ENCODE measurements at regions of chr9 and their contacts with region 1.

Region 1: DNA sequence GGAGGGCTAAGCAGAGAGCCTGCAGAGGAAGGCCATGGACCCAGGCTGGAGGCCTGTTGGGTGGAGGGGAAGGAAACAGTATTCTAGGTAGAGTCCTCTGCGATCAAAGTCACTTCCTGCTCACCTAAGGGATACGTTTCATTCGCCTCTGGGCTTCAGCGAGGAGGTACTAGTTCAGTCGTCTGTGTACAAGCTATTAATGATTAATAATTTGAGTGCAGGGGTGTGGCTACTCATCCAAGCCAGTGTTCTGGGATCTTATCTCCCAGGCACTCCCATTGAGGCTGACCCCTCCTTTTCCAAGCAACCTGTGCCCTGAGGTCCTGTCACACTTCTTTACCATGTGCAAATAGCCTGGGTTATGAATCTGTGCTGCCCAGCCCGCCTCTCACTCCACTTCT is 25.2 kb downstream of the RALGPS1 start:
- DNase-seq: no peak
- H3K4me3 ChIP-seq: no peak overlapping the region
- H3K27ac ChIP-seq: no peak overlapping the region
- H3K4me1 ChIP-seq: peaks cover 5% of the 10 kb centered on the region
- H3K27me3 ChIP-seq: no peaks in the 10 kb centered on the region
- CTCF ChIP-seq: no peak
- POLR2A ChIP-seq: no peak

Region 2: DNA sequence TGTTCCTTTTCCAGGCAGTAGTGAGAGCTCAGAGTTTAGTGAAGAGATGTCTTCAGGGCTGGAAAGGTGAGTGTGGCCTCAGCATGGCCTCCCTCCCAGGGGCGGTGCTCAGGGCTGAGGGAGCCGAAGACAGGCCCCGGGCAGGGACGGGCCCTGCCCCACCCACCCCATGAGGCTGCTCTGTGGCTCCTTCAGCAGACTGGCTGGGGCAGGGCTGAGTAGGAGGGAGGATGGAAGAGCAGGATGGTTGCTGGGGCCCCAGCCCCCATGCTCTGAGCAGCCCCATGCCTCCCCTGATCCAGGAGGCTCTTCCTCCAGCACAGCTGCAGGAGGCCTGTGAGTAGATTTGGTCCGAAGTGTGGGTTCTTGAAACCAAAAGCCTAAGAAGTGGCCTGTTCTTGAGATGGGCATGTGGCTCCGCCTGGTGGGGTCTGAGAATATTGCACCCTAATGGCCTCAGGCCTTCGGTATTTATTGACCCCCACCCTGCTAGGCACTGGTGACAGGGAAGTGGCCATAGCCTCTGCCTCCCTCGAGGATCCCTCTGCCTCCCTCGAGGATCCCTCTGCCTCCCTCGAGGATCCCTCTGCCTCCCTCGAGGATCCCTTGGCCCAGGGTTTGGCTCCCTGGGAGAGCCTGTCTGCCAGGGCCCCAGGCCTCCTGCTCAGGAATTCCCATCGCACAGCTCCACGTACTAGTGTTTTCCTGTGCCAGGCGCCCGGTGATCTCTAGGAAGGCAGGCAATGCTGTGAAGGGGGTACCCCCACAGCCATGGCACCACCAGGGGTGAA is 259.4 kb after region 1 on chr9:
- intact Hi-C with region 1: loop called (anchors 5 kb)
- DNase-seq: no peak
- H3K4me3 ChIP-seq: no peak overlapping the region
- H3K27ac ChIP-seq: peak overlapping the region; percentile 87
- H3K4me1 ChIP-seq: peaks cover 43% of the 10 kb centered on the region
- H3K27me3 ChIP-seq: no peaks in the 10 kb centered on the region
- CTCF ChIP-seq: peak; percentile 92 to 97 (median 94)
- POLR2A ChIP-seq: no peak